Naive thymus-derived CD4-positive, alpha-beta T cell (primary cell): ENCODE measurements at regions of chr19 and their contacts with region 1.

Region 1: GRCh38 chr19:41226053-41226873 is 7.2 kb downstream of the AXL start:
- DNase-seq: peak; percentile 18 to 66 (median 47)
- ATAC-seq: peak; percentile 69
- H3K4me3 ChIP-seq: peak overlapping the region; percentile 58
- H3K4me3 Mint-ChIP-seq: peak overlapping the region; percentile 82 to 96 (median 90)
- H3K27ac ChIP-seq: peak overlapping the region; percentile 51
- H3K27ac Mint-ChIP-seq: peak overlapping the region; percentile 31 to 90 (median 88)
- H3K4me1 ChIP-seq: peaks cover 7 to 11% of the 10 kb centered on the region in 2 donors
- H3K4me1 Mint-ChIP-seq: peaks cover 5 to 21% (median 16%) of the 10 kb centered on the region in 7 donors
- H3K27me3 ChIP-seq: no peaks in the 10 kb centered on the region
- H3K27me3 Mint-ChIP-seq: peaks cover under 1 to 14% (median 5%) of the 10 kb centered on the region in 5 donors

Region 2: GRCh38 chr19:41206926-41207750 is 19.1 kb before region 1 on chr19:
- CTCF ChIA-PET with region 1: interaction called, 4 read pairs
- POLR2A ChIA-PET with region 1: interaction called, 3 read pairs
- intact Hi-C with region 1: loop called in 1 of 2 experiments (anchors 1 kb)
- DNase-seq: no peak
- ATAC-seq: no peak
- H3K4me3 ChIP-seq: no peak overlapping the region
- H3K4me3 Mint-ChIP-seq: no peak overlapping the region
- H3K27ac ChIP-seq: no peak overlapping the region
- H3K27ac Mint-ChIP-seq: peak overlapping the region in 6 of 9 donors; percentile 15 to 85 (median 54)
- H3K4me1 ChIP-seq: no peaks in the 10 kb centered on the region
- H3K4me1 Mint-ChIP-seq: peaks cover 3 to 12% (median 7%) of the 10 kb centered on the region in 7 donors
- H3K27me3 ChIP-seq: no peaks in the 10 kb centered on the region
- H3K27me3 Mint-ChIP-seq: no peaks in the 10 kb centered on the region

Region 3: DNA sequence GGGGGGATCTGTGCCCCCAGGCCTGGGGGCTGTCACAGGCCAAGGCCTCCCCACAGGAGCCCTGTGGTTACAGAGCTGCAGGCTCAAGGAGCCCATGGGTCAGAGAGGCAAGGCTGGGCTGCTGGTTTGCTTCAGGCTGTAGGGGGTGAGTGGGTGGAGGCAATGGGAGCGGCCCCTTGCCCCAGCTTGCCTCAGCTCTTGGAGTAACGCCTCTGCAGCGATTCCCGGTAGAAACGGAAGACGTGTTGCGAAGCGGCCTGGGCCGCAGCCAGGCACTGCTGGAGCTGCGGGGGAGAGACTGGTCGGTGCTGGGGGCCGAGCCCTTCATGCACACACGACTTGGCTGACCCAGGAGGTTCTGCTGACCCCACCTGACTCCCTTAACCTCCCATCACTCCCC is 160.2 kb after region 1 on chr19:
- CTCF ChIA-PET with region 1: no interaction called
- POLR2A ChIA-PET with region 1: no interaction called
- intact Hi-C with region 1: no loop called
- DNase-seq: no peak
- ATAC-seq: no peak
- H3K4me3 ChIP-seq: no peak overlapping the region
- H3K4me3 Mint-ChIP-seq: no peak overlapping the region
- H3K27ac ChIP-seq: no peak overlapping the region
- H3K27ac Mint-ChIP-seq: peak overlapping the region in 1 of 9 donors; percentile 67
- H3K4me1 ChIP-seq: no peaks in the 10 kb centered on the region
- H3K4me1 Mint-ChIP-seq: peaks cover 0 to 6% (median 0%) of the 10 kb centered on the region in 7 donors
- H3K27me3 ChIP-seq: no peaks in the 10 kb centered on the region
- H3K27me3 Mint-ChIP-seq: no peaks in the 10 kb centered on the region